Dorsolateral prefrontal cortex (tissue), 120 donors: ENCODE measurements at regions of chr2 and their contacts with region 1.

Region 1: GRCh38 chr2:196926562-196927375 is at the start of gene PGAP1:
- DNase-seq: peak; percentile 77 to 95 (median 86)
- H3K4me3 ChIP-seq: peak within 1 kb of the TSS; percentile 55 to 94 (median 85)
- H3K27ac ChIP-seq: peak within 1 kb of the TSS; percentile 71 to 98 (median 95)
- H3K27me3 ChIP-seq: no peaks in the 10 kb centered on the region
- CTCF ChIP-seq: peak in 14 of 56 donors; percentile 5 to 40 (median 20)
- total RNA-seq, gene PGAP1: 19.8 to 61.3 (median 33.4) TPM

Region 2: GRCh38 chr2:196798980-196799379 is 127.8 kb before region 1 on chr2:
- intact Hi-C with region 1: loop called in 1 of 2 experiments (anchors 5 kb)
- DNase-seq: no peak
- H3K4me3 ChIP-seq: peak overlapping the region; percentile 34 to 93 (median 81)
- H3K27ac ChIP-seq: peak overlapping the region in 57 of 59 donors; percentile 13 to 93 (median 83)
- H3K27me3 ChIP-seq: no peaks in the 10 kb centered on the region
- CTCF ChIP-seq: no peak

Region 3: GRCh38 chr2:197011799-197012641 is 85.3 kb after region 1 on chr2:
- intact Hi-C with region 1: loop called (anchors 5 kb)
- DNase-seq: peak in 4 of 10 donors; percentile 31 to 50 (median 41)
- H3K4me3 ChIP-seq: peak overlapping the region in 5 of 59 donors; percentile 2 to 41 (median 9)
- H3K27ac ChIP-seq: peak overlapping the region in 51 of 59 donors; percentile 1 to 82 (median 64)
- H3K27me3 ChIP-seq: no peaks in the 10 kb centered on the region
- CTCF ChIP-seq: peak; percentile 61 to 97 (median 90)

Region 4: GRCh38 chr2:197113275-197113711 is 186.5 kb after region 1 on chr2:
- intact Hi-C with region 1: loop called in 1 of 2 experiments (anchors 10 kb)
- DNase-seq: no peak
- H3K4me3 ChIP-seq: no peak overlapping the region
- H3K27ac ChIP-seq: peak overlapping the region in 30 of 59 donors; percentile 0 to 74 (median 26)
- H3K27me3 ChIP-seq: no peaks in the 10 kb centered on the region
- CTCF ChIP-seq: peak; percentile 58 to 91 (median 77)

Region 5: DNA sequence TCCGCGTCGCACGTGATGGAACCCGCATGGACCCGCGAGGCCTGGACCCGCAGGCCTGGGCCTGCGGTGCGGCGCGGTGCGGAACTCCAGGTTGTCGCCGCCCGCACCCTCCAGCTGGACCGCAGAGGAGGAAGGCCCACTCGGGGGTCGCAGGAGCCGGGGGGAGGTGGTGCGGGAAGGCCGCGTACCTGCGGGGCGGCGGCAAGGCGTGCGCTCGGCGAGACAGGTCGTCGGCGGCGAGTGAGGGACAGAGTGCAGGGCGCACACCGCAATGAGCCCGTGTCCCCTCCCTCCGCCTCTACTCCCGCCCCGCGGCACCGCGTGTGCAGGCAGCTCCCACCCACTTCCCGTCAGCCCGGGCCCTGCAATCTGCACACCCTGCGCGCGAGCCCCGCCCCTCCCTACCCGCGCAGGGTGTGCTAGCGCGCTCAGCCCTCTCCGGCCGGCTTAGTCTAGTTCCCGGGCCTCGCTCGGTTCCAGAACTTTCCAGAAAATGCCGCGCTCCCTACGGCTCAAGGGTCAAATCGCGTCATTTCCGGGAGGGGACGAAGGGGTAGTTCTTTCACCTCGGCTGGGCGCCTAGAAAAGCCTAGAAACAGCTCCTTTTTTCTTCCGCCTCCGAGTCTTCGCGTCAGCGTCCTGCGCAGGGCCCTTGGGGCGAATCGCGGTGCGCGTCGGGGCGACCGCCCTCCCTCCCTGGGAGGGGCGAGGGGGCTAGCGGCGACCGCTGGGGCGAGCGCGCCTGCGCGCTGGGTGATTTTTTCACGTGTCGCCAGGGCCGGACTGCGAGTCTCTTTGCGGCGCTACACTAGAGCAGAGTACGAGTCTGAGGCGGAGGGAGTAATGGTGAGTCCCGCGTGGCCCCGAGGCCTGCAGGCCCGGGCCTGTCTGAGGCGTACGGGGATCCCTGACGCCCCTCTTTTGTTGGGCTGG is 573.1 kb after region 1 on chr2 and contains the starts of genes HSPD1 and HSPE1:
- intact Hi-C with region 1: loop called in 1 of 2 experiments (anchors 5 kb)
- DNase-seq: peak; percentile 95 to 99 (median 97)
- H3K4me3 ChIP-seq: peak within 1 kb of the TSS; percentile 65 to 100 (median 92)
- H3K27ac ChIP-seq: peak within 1 kb of the TSS; percentile 96 to 100 (median 100)
- H3K27me3 ChIP-seq: no peaks in the 10 kb centered on the region
- CTCF ChIP-seq: peak in 17 of 56 donors; percentile 3 to 30 (median 10)
- total RNA-seq, gene HSPD1: 104 to 555 (median 149) TPM
- total RNA-seq, gene HSPE1: 54.9 to 298 (median 81.8) TPM